CD8-positive, alpha-beta memory T cell (primary cell): ENCODE measurements at regions of chr15 and their contacts with region 1.

Region 1: GRCh38 chr15:68277603-68278344 is at the start of gene FEM1B:
- DNase-seq: peak; percentile 80 to 92 (median 91)
- H3K4me3 ChIP-seq: peak within 1 kb of the TSS; percentile 85
- H3K4me3 Mint-ChIP-seq: peak within 1 kb of the TSS; percentile 83 to 96 (median 94)
- H3K27ac ChIP-seq: peak within 1 kb of the TSS; percentile 89
- H3K27ac Mint-ChIP-seq: peak within 1 kb of the TSS; percentile 95 to 100 (median 98)
- H3K4me1 ChIP-seq: peaks cover 41% of the 10 kb centered on the region
- H3K4me1 Mint-ChIP-seq: peaks cover 56 to 62% (median 57%) of the 10 kb centered on the region in 3 donors
- H3K27me3 ChIP-seq: no peaks in the 10 kb centered on the region
- H3K27me3 Mint-ChIP-seq: no peaks in the 10 kb centered on the region
- total RNA-seq, gene FEM1B: 37.7 to 39.6 TPM

Region 2: GRCh38 chr15:67521029-67521811 is 756.6 kb before region 1 on chr15 and contains the start of gene C15orf61:
- CTCF ChIA-PET with region 1: no interaction called
- POLR2A ChIA-PET with region 1: interaction called, 10 read pairs
- DNase-seq: peak; percentile 76 to 90 (median 87)
- H3K4me3 ChIP-seq: peak within 1 kb of the TSS; percentile 95
- H3K4me3 Mint-ChIP-seq: peak within 1 kb of the TSS; percentile 90 to 96 (median 93)
- H3K27ac ChIP-seq: peak within 1 kb of the TSS; percentile 78
- H3K27ac Mint-ChIP-seq: peak within 1 kb of the TSS; percentile 91 to 98 (median 96)
- H3K4me1 ChIP-seq: peaks cover 25% of the 10 kb centered on the region
- H3K4me1 Mint-ChIP-seq: peaks cover 28 to 48% (median 33%) of the 10 kb centered on the region in 3 donors
- H3K27me3 ChIP-seq: no peaks in the 10 kb centered on the region
- H3K27me3 Mint-ChIP-seq: peaks cover 0 to 3% of the 10 kb centered on the region in 2 donors
- total RNA-seq, gene C15orf61: 5.1 to 5.7 TPM

Region 3: GRCh38 chr15:67945951-67946700 is 331.6 kb before region 1 on chr15:
- CTCF ChIA-PET with region 1: no interaction called
- POLR2A ChIA-PET with region 1: no interaction called
- DNase-seq: no peak
- H3K4me3 ChIP-seq: no peak overlapping the region
- H3K4me3 Mint-ChIP-seq: peak overlapping the region in 3 of 7 donors; percentile 3 to 31 (median 13)
- H3K27ac ChIP-seq: no peak overlapping the region
- H3K27ac Mint-ChIP-seq: peak overlapping the region in 4 of 8 donors; percentile 7 to 71 (median 60)
- H3K4me1 ChIP-seq: peaks cover 3% of the 10 kb centered on the region
- H3K4me1 Mint-ChIP-seq: peaks cover 6 to 16% (median 9%) of the 10 kb centered on the region in 3 donors
- H3K27me3 ChIP-seq: no peaks in the 10 kb centered on the region
- H3K27me3 Mint-ChIP-seq: peaks cover 0 to 8% of the 10 kb centered on the region in 2 donors

Region 4: DNA sequence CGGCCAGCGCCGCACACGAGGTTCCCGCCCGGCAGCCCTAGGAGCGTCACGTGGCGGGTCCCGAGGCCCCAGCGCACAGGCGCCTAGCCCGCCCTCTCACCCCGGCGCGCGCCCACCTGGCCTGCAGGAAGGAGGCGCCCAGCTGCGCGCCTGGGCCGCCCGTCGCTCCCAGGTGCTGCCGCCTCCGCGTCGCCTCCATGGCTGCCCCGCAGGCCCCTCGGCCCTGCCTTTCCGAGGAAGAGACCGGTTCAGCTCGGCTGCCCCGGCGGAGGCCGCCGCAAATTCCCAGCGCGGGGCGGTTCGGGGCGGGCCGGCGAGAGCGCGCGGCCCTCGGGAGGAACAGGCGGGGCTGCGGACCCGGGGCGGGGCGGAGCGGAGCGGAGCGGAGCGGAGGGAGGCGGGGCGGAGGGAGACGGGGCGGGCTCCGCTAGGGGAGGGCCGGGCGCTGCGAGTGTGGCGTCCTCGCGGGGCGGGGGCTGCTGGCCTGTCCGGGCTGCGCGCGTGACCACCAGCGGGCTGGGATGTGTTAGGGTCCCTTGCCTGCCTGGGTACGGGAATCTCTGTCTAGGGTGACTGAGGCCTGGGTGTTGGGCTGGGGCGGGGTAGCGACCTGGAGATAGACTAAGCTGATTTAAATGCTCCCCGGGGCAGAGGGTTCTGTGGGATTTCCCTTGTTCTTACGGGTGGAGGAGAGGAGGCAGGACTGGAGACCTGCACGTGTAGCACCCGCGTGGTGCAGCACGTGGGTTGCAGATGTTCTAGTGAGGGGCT is 48.2 kb before region 1 on chr15 and contains the start of gene CLN6:
- CTCF ChIA-PET with region 1: interaction called, 4 read pairs
- POLR2A ChIA-PET with region 1: interaction called, 11 read pairs
- DNase-seq: peak; percentile 75 to 87 (median 82)
- H3K4me3 ChIP-seq: peak within 1 kb of the TSS; percentile 90
- H3K4me3 Mint-ChIP-seq: peak within 1 kb of the TSS; percentile 91 to 96 (median 93)
- H3K27ac ChIP-seq: peak within 1 kb of the TSS; percentile 72
- H3K27ac Mint-ChIP-seq: peak within 1 kb of the TSS; percentile 74 to 95 (median 94)
- H3K4me1 ChIP-seq: peaks cover 17% of the 10 kb centered on the region
- H3K4me1 Mint-ChIP-seq: peaks cover 28 to 38% (median 37%) of the 10 kb centered on the region in 3 donors
- H3K27me3 ChIP-seq: no peaks in the 10 kb centered on the region
- H3K27me3 Mint-ChIP-seq: peaks cover 7 to 10% of the 10 kb centered on the region in 2 donors
- total RNA-seq, gene CLN6: 69.1 to 73.8 TPM

Region 5: DNA sequence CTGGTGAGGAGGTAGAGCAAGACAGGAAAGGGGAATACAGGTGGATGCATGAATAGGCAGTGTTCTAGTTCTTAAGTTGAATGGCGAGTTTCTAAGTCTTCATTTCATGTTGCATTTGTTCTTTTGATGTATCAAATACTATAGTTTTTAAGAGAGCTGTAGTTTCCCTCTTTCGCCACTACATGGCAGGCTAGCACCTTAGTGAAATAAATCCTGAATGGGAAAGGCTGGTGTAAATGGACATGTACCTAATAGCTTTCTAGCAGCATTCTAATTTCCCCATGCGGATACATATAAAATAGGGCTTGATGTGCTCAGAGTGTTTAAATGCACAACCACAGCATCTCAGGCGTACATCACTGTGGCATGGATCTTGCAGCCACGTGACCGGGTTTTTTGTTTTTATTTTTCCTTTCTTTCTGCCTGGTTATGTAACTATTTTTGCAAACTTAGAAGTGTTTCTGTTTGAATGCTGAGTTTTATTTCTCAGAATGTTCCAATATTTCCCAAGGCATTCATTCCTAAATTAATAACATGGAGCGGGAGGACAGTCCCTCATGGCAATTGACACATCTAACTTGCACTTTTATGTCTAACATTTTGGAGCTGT is 24.7 kb before region 1 on chr15:
- CTCF ChIA-PET with region 1: interaction called, 10 read pairs
- POLR2A ChIA-PET with region 1: interaction called, 7 read pairs
- DNase-seq: peak in 3 of 5 donors; percentile 32 to 59 (median 56)
- H3K4me3 ChIP-seq: no peak overlapping the region
- H3K4me3 Mint-ChIP-seq: no peak overlapping the region
- H3K27ac ChIP-seq: no peak overlapping the region
- H3K27ac Mint-ChIP-seq: no peak overlapping the region
- H3K4me1 ChIP-seq: no peaks in the 10 kb centered on the region
- H3K4me1 Mint-ChIP-seq: peaks cover 0 to 8% (median 0%) of the 10 kb centered on the region in 3 donors
- H3K27me3 ChIP-seq: no peaks in the 10 kb centered on the region
- H3K27me3 Mint-ChIP-seq: peaks cover 8 to 15% of the 10 kb centered on the region in 2 donors

Region 6: DNA sequence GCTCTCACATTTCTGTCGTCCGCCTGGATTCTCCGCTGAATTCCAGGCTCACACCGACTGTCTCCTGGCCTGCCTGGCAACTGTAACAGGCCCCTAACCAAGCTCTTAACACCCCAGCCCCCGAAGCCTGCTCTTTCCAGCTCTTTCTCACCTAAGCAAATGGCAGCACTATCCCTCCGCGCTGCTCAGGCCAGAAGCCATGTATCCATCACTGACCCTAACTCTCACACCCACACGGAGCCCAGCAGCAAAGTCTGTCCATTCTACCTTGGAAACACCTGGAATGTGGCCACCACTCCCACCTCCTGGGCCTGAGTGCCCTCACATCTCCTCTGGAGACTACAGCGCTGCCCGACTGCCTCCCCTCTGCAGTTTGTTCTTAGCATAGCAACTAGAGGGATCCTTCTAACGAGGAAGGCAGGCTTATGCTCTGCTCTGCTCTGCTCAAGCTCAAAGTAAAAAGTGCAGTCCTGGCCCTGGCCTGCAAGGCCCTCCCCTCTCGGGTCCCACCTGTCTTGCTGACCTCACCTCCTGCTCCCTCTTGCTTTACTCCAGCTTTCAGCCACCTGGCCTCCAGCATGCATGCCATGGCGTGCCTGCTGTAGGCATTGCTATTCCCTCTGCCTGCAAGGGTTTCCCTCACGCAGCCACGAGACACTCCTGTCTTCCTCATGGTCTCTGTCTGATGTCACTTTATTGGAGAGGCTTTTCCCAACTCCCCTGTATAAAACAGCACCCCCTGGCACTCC is 27.0 kb after region 1 on chr15:
- CTCF ChIA-PET with region 1: interaction called, 13 read pairs
- POLR2A ChIA-PET with region 1: interaction called, 4 read pairs
- DNase-seq: no peak
- H3K4me3 ChIP-seq: no peak overlapping the region
- H3K4me3 Mint-ChIP-seq: no peak overlapping the region
- H3K27ac ChIP-seq: no peak overlapping the region
- H3K27ac Mint-ChIP-seq: no peak overlapping the region
- H3K4me1 ChIP-seq: peaks cover 5% of the 10 kb centered on the region
- H3K4me1 Mint-ChIP-seq: peaks cover 12 to 19% (median 16%) of the 10 kb centered on the region in 3 donors
- H3K27me3 ChIP-seq: peaks cover 3% of the 10 kb centered on the region
- H3K27me3 Mint-ChIP-seq: peaks cover 0 to 11% of the 10 kb centered on the region in 2 donors